WTC11 (cell line): ENCODE measurements at regions of chr16 and their contacts with region 1.

Region 1: GRCh38 chr16:29700253-29700987 is 21.4 kb downstream of the QPRT start:
- DNase-seq: peak; percentile 83
- ATAC-seq: peak; percentile 66
- H3K4me3 Mint-ChIP-seq: no peak overlapping the region
- H3K27ac Mint-ChIP-seq: no peak overlapping the region
- H3K4me1 Mint-ChIP-seq: peaks cover 38% of the 10 kb centered on the region
- H3K27me3 Mint-ChIP-seq: no peaks in the 10 kb centered on the region
- CTCF ChIP-seq: peak; percentile 87

Region 2: DNA sequence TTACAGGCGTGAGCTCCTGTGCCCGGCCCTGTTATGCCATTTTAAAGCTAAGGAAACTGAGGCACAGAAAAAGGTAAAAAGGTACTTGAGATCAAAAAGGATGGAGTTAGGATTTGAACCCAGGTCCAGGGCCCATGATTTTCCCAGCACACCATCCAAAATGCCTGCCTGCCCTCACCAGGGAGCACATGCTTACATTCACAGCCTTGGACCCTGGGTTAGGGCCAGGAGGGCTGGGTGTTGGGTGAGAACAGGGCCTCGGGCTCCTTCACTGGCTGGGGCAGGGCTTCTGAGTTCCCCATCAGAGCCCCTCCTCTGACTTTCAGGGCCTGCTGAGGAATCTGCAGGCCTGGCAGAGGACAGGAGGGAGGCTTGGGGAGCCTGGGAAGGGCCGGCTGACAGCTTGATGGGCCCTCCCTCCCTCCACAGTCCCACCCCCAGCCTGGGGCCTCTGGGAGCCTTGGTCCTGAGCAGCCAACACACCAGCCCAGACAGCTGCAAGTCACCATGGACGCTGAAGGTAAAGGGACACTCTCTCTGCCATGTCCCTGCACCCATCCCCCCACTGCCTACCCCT is 21.6 kb before region 1 on chr16 and contains the start of gene QPRT:
- CTCF ChIA-PET with region 1: interaction called, 15 read pairs
- POLR2A ChIA-PET with region 1: interaction called, 23 read pairs
- DNase-seq: peak; percentile 90
- ATAC-seq: peak; percentile 85
- H3K4me3 Mint-ChIP-seq: peak within 1 kb of the TSS; percentile 91
- H3K27ac Mint-ChIP-seq: peak within 1 kb of the TSS; percentile 100
- H3K4me1 Mint-ChIP-seq: peaks cover 40% of the 10 kb centered on the region
- H3K27me3 Mint-ChIP-seq: no peaks in the 10 kb centered on the region
- CTCF ChIP-seq: no peak
- total RNA-seq, gene QPRT: 138 to 187 TPM (median 182 TPM) in 3 replicates

Region 3: DNA sequence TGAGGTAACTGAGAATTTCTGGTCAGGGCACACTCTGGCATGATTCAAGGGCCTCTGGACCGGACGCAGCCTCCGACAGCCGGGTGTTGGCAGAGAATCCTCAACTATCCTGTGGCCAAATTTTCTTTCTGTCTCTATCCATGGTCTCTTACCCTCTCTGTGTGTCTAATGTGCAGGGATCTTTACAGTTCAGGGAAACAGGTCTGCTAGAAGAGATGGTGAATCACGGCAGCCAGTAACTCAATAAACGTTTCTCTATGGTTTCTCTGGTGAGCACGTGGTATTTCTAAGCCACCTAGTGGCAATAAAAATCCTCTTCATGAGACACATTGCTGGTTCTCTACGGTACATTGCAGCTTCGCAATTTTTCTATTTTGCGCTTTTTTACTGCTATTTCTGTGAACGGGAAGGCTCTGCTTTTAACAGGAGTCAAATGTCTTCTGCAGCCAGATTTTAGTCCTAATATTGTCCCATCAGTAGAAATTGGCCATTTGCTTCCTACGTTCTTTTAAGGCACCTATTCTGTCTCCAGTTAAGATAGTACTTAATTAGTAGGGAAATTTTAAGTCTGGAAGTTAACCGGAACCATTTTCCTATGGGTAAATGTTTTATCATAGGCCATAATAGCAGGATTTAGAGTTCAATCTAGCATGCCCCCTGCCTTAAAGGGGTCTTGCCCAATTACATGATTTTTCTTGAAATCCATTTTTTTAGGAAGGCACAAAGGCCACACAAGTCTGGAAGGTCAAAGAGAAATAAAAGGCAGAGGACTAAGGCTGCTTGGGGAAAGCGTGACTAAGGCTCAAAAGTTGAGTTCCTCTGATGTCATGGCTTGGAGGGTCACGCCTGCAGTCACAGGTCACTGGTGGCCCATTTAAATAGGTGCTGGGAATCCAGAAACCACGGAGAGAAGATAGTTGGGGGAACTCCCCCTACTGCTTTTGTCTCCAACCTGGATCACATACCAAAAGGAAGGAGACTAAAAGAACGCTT is 10.1 kb after region 1 on chr16:
- CTCF ChIA-PET with region 1: interaction called, 17 read pairs
- POLR2A ChIA-PET with region 1: interaction called, 6 read pairs
- DNase-seq: no peak
- ATAC-seq: no peak; the same call in 1 of the 2 replicates
- H3K4me3 Mint-ChIP-seq: peak overlapping the region; percentile 95
- H3K27ac Mint-ChIP-seq: peak overlapping the region; percentile 98
- H3K4me1 Mint-ChIP-seq: peaks cover 58% of the 10 kb centered on the region
- H3K27me3 Mint-ChIP-seq: no peaks in the 10 kb centered on the region
- CTCF ChIP-seq: peak; percentile 38; the same call in 1 of the 2 replicates

Region 4: DNA sequence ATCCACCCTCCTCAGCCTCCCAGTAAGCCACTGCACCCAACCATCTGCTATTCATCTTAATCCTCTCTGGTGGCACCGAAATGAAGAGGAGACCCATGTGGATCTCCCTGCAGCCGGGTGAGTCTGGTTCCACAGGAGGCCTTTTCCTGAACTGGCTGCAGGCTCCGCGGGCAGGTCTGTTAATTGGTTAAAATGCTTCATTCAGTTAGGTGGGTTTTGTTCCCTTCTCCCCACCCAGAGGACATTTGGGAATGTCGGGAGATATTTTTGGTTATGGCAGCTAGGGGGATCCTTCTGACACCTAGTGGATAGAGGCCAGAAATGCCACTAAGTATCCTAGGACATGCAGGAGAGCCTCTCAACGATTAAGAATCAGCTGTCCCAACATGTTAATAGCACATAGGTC is 28.7 kb after region 1 on chr16:
- CTCF ChIA-PET with region 1: interaction called, 38 read pairs
- POLR2A ChIA-PET with region 1: no interaction called
- DNase-seq: no peak
- ATAC-seq: peak; percentile 90
- H3K4me3 Mint-ChIP-seq: no peak overlapping the region
- H3K27ac Mint-ChIP-seq: peak overlapping the region; percentile 71
- H3K4me1 Mint-ChIP-seq: peaks cover 30% of the 10 kb centered on the region
- H3K27me3 Mint-ChIP-seq: no peaks in the 10 kb centered on the region
- CTCF ChIP-seq: no peak; the same call in 1 of the 2 replicates

Region 5: DNA sequence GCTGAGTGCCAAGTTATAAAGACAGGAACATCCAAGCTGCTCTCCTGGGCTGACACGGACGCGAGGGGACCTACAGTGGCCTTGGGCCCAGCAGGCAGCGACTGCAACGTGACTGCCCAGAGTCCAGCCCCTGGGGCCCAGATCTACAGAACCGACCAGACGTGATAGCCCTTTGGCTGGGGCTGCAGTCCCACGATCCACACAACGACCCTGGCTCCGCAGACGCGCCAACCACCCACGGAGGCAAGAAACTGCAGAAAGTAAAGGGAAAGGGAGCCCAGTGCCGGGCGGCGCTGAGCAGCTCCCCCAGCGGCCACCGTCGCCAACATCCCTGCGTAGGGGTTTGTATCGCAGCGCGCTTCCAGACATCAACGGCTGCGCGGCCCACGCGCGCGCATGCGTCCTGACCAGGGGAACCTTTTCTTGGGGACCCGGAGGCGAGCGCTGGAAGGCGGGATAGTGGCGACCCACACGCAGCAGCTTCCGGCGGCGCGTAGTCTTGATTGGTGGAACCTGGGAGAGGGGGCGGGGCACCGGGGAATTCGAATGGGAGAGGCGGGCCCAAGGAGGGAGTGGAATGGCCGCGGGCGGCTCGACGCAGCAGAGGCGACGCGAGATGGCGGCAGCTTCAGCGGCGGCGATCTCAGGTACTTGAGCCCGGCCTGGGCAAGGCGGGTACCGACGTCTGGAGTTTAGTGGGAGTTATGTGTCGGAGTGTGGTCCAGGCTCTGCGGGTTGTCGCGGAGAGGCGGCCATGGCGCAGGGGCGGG is 89.9 kb after region 1 on chr16 and contains the start of gene KIF22:
- CTCF ChIA-PET with region 1: interaction called, 30 read pairs
- POLR2A ChIA-PET with region 1: interaction called, 4 read pairs
- DNase-seq: peak; percentile 100
- ATAC-seq: peak; percentile 96
- H3K4me3 Mint-ChIP-seq: peak within 1 kb of the TSS; percentile 98
- H3K27ac Mint-ChIP-seq: peak within 1 kb of the TSS; percentile 97
- H3K4me1 Mint-ChIP-seq: peaks cover 25% of the 10 kb centered on the region
- H3K27me3 Mint-ChIP-seq: peaks cover 19% of the 10 kb centered on the region
- CTCF ChIP-seq: no peak
- total RNA-seq, gene KIF22: 165 to 182 TPM (median 175 TPM) in 3 replicates

Region 6: GRCh38 chr16:29839822-29840221 is 139.4 kb after region 1 on chr16:
- CTCF ChIA-PET with region 1: no interaction called
- POLR2A ChIA-PET with region 1: no interaction called
- DNase-seq: no peak
- ATAC-seq: no peak
- H3K4me3 Mint-ChIP-seq: no peak overlapping the region
- H3K27ac Mint-ChIP-seq: no peak overlapping the region
- H3K4me1 Mint-ChIP-seq: no peaks in the 10 kb centered on the region
- H3K27me3 Mint-ChIP-seq: no peaks in the 10 kb centered on the region; the same call in 1 of the 2 replicates
- CTCF ChIP-seq: no peak

Region 7: DNA sequence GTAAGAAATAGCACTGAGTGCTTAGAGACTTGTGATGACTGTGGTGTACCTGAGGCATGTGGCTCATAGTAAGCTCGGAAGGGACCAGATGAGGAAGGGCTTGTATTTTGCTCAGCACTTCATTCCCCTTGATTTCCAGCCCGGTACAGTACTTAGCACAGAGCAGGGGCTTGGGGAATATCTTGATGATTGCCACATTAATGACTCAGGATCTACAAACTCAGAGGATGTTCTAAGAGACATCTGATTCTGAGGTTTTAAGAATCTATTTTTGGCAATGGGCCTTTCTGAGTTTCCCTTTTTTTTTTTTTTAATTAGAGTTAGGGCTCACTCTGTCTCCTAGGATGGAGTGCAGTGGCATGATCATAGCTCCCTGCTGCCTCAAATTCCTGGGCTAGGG is 209.0 kb after region 1 on chr16:
- CTCF ChIA-PET with region 1: no interaction called
- POLR2A ChIA-PET with region 1: interaction called, 10 read pairs
- DNase-seq: no peak
- ATAC-seq: no peak
- H3K4me3 Mint-ChIP-seq: no peak overlapping the region
- H3K27ac Mint-ChIP-seq: peak overlapping the region; percentile 24; the same call in 1 of the 2 replicates
- H3K4me1 Mint-ChIP-seq: peaks cover 8% of the 10 kb centered on the region
- H3K27me3 Mint-ChIP-seq: no peaks in the 10 kb centered on the region
- CTCF ChIP-seq: no peak

Region 8: DNA sequence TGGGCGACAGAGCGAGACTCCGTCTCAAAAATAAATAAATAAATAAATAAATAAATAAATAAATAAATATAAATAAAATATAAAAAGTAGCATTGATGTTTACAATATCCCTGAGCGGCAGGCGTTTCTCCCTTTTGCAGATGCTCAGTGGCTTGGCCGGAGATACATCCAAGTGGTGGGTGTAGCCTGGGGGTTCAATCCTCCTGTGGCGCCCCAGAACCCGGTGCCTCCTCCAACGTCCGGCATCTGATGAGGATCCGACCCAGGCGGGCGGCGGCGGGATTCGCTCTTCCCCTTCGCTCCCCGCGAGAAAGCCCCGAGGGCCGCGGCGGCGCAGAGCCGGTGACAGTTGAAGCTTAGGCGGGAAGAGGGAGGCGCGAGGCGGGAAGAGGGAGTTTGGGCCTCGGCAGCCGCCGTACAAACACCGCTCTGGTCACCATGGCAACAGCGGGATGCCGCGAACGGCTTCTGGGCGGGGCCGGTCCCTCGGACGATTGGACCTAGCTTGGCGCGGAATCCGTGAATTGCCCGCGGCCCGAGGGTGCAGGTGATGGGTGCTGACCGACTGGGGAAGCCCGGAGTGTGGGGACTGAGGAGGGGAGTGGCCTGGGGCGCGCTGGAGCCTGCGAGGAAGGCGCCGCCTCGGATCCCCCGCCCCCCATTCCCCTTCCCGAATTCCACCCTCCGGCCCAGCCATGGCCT is 352.4 kb after region 1 on chr16:
- CTCF ChIA-PET with region 1: interaction called, 13 read pairs
- POLR2A ChIA-PET with region 1: no interaction called
- DNase-seq: peak; percentile 94
- ATAC-seq: peak; percentile 60
- H3K4me3 Mint-ChIP-seq: peak overlapping the region; percentile 82
- H3K27ac Mint-ChIP-seq: no peak overlapping the region
- H3K4me1 Mint-ChIP-seq: peaks cover 14% of the 10 kb centered on the region
- H3K27me3 Mint-ChIP-seq: peaks cover 37% of the 10 kb centered on the region
- CTCF ChIP-seq: no peak